Activated T-helper 1 cell treated with anti-CD3 and anti-CD28 coated beads, Interleukin-12 subunit alpha, Interleukin-12 subunit beta, Interleukin-2, Interleukin-4 antibody, amounts not matched to agents 30 ng/mL and 10 ng/mL and 1 ng/mL, durations not matched to agents 14 hours and 24 hours and 36 hours (primary cell): ENCODE measurements at regions of chr15 and their contacts with region 1.

Region 1: GRCh38 chr15:60044636-60045270 is 40.6 kb downstream of the FOXB1 start:
- DNase-seq: peak; percentile 39
- H3K4me3 Mint-ChIP-seq: peak overlapping the region; percentile 6
- H3K27ac Mint-ChIP-seq: peak overlapping the region; percentile 54
- H3K4me1 Mint-ChIP-seq: peaks cover 24% of the 10 kb centered on the region
- H3K27me3 Mint-ChIP-seq: no peaks in the 10 kb centered on the region

Region 2: GRCh38 chr15:59933607-59934006 is 111.1 kb before region 1 on chr15:
- intact Hi-C with region 1: no loop called
- DNase-seq: no peak
- H3K4me3 Mint-ChIP-seq: no peak overlapping the region
- H3K27ac Mint-ChIP-seq: no peak overlapping the region
- H3K4me1 Mint-ChIP-seq: no peaks in the 10 kb centered on the region
- H3K27me3 Mint-ChIP-seq: peaks cover 39% of the 10 kb centered on the region

Region 3: DNA sequence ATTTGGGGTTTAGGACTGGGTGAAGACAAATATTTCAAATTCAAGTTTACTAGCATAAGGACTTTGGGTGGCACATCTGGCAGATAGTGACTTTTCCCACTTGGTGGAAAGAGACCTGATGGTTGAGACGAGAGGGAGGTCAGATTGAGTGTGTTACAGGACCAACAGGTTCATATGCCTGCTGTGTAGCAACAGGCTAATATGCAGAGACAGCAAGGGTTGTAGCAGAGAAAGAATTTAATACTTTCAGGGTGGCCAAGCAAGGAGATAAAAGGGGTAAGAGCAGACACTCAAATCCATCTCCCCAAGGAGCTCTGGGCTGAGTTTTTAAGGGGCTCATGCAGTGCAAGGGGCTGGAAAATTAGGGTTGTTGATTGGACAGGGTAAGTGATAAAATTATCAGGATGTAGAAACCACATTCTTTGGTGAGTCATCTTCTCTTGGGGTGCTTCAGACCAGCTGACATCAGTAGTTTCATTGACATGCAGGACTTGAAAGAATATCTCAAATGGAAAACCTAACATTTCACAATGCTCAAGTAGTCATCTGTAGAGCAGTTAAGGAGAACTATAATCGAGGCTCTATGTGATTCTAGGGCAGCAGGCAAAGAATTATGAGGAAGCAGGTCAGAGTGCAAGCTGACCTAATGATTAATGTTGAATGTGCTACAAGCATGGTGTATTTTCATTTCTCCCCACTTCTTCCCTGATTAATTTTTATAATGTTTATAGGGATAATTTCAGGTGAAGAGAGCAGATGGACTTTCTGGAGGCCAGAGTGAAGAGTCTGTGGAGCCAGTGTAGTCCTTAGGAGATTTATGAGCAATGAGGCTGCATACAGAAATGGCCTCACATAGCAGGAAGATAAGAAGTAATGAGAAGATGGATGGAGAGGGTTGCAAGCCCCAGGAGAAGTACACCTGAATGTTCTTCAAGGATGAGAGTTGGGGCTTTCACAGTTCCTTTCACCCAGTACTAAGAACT is 26.9 kb before region 1 on chr15:
- intact Hi-C with region 1: loop called (anchors 1 kb)
- DNase-seq: no peak
- H3K4me3 Mint-ChIP-seq: peak overlapping the region; percentile 4
- H3K27ac Mint-ChIP-seq: peak overlapping the region; percentile 30
- H3K4me1 Mint-ChIP-seq: peaks cover 19% of the 10 kb centered on the region
- H3K27me3 Mint-ChIP-seq: peaks cover 14% of the 10 kb centered on the region

Region 4: GRCh38 chr15:60077581-60078359 is 33.0 kb after region 1 on chr15:
- intact Hi-C with region 1: loop called (anchors 1 kb)
- DNase-seq: peak; percentile 3
- H3K4me3 Mint-ChIP-seq: peak overlapping the region; percentile 4
- H3K27ac Mint-ChIP-seq: peak overlapping the region; percentile 75
- H3K4me1 Mint-ChIP-seq: peaks cover 49% of the 10 kb centered on the region
- H3K27me3 Mint-ChIP-seq: peaks cover 2% of the 10 kb centered on the region